ENCODE measurements at regions of chr12 and their contacts with region 1.

Region 1: DNA sequence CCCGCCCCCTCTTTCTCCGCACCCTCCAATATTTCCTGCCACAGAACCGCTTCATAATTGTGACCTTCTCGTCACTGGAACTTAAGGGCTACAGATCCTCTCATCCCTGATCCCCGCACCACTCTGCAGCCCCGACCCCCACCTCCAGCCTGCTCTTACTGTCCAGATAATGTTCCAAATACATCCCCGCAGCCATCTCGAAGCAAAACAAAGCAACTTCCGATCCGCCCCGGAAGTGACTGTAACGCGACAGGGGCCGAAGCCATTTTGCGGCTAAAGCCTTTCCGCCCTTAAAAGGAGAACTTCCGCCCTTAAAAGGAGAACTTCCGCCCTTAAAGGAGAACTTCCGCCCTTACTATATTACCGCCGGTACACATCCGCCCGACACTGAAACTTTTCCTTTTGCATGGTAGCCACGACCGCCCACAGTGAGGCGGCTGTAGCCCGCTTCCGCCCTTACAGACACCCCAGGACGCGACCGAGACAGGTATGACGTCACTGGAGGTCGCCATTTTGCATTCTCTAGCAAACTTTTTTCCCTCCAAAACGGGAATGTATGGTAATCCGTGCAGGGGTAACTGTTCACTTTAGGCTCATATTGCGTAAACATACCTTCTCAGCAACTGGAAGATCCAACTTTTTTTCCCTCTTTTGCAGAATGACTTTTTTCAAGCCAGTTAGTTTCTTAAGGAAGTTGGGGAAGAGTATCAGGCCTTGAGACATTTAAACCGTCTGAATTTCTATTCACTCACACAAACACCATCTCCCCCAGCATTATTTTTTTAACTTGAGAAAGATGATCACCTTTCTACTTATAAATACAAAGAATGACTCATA is at the start of gene ING4:
- DNase-seq: peak; percentile 99
- ATAC-seq: peak; percentile 98
- H3K4me3 ChIP-seq: peak within 1 kb of the TSS; percentile 62 to 94 (median 90)
- H3K4me3 Mint-ChIP-seq: peak within 1 kb of the TSS; percentile 93
- H3K27ac ChIP-seq: peak within 1 kb of the TSS; percentile 64 to 91
- H3K27ac Mint-ChIP-seq: peak within 1 kb of the TSS; percentile 92
- H3K4me1 ChIP-seq: peaks cover 15 to 19% of the 10 kb centered on the region in 2 donors
- H3K4me1 Mint-ChIP-seq: peaks cover 27% of the 10 kb centered on the region
- H3K27me3 ChIP-seq: no peaks in the 10 kb centered on the region
- H3K27me3 Mint-ChIP-seq: no peaks in the 10 kb centered on the region
- CTCF ChIP-seq: no peak
- total RNA-seq, gene ING4: 81.1 TPM in 2 replicates

Region 2: DNA sequence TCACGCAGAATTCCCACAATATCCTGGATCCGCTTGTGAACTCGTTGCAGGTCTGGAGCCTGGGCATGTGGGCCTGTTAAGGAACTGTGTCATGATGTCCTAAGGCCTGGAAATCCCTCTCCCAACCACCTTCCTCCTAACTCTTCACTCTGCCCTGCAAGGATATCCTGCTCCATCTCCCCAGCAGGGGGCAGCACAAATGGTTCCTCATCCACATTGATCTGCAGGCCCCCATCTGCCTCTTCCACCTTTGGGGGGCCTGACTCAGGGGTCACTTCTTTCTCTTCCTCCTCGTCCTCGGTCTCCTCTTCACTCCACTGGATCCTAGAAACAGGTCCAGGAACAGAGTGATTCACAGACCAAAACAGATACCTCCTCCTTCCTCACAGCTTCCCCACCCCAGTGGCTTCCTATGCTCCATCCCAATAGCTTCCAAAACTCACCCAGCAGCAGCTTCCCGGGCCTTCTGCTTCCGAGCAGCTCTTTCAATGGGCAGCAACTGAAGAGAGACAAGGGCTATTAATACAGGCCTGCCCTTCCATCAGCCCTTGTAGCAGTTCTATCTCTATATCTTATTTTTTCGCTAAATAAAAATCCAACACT is 99.6 kb before region 1 on chr12:
- CTCF ChIA-PET with region 1: no interaction called
- POLR2A ChIA-PET with region 1: no interaction called
- intact Hi-C with region 1: loop called (anchors 1 kb)
- DNase-seq: peak; percentile 76
- ATAC-seq: peak; percentile 28
- H3K4me3 ChIP-seq: no peak overlapping the region
- H3K4me3 Mint-ChIP-seq: no peak overlapping the region
- H3K27ac ChIP-seq: no peak overlapping the region
- H3K27ac Mint-ChIP-seq: peak overlapping the region; percentile 10
- H3K4me1 ChIP-seq: peaks cover 7 to 13% of the 10 kb centered on the region in 2 donors
- H3K4me1 Mint-ChIP-seq: peaks cover 28% of the 10 kb centered on the region
- H3K27me3 ChIP-seq: no peaks in the 10 kb centered on the region
- H3K27me3 Mint-ChIP-seq: no peaks in the 10 kb centered on the region
- CTCF ChIP-seq: peak; percentile 95

Region 3: DNA sequence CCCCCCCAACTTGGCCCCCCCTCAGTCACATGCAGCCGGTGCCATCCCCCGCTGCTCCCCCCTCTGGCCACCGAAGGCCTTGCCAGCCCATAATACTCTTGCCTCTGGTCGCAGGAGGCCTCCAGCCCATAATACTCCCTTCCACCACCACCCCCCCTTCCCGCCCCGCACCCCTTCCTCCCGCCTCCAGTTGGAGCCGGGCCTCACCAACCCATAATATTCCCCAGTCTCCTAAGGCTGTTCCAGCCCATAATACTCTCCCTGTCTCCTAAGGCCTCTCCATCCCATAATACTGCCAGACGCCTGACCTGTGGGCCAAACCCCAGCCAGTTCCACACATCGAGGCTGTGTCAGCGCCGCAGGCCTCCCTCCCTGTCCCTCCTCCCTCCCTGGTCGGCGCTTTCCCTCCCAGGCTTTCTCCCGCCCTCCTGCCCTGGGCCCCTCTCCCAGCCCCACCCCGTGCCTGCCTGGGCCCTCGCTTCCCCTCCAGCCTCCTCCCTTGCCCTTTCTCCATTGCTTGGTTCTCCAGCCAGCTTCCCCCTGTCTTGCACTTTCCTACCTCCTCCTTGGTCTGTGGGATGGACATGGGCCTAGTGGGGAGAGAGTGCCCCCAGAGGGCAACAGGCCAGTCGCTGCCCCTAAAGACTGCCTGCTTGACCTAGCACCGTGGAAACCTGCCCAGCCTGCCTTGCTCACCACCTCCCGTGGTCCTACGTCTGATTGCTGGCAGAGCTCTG is 49.2 kb before region 1 on chr12:
- CTCF ChIA-PET with region 1: no interaction called
- POLR2A ChIA-PET with region 1: interaction called, 4 read pairs
- intact Hi-C with region 1: loop called (anchors 1 kb)
- DNase-seq: peak; percentile 81
- ATAC-seq: peak; percentile 48
- H3K4me3 ChIP-seq: no peak overlapping the region
- H3K4me3 Mint-ChIP-seq: peak overlapping the region; percentile 24
- H3K27ac ChIP-seq: peak overlapping the region; percentile 63 to 88
- H3K27ac Mint-ChIP-seq: peak overlapping the region; percentile 87
- H3K4me1 ChIP-seq: peaks cover 32 to 51% of the 10 kb centered on the region in 2 donors
- H3K4me1 Mint-ChIP-seq: peaks cover 65% of the 10 kb centered on the region
- H3K27me3 ChIP-seq: no peaks in the 10 kb centered on the region
- H3K27me3 Mint-ChIP-seq: no peaks in the 10 kb centered on the region
- CTCF ChIP-seq: no peak

Region 4: DNA sequence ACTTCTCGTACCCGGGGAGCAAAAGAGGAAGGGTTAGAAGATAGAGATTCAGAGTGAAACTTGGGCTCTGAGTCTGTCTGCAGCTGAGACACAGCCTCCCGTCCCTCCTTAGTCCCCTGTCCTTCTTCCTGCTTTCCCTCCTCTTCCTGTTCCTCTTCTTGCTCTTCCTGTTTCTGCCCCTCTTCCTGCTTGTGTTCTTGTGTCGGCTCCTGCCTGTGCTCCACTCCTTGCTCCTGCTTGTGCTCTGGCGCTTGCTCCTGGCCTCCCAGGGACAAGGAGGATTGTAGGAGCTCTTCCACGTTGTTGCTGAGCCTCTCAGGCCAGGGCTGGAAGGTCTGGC is 18.9 kb before region 1 on chr12:
- CTCF ChIA-PET with region 1: no interaction called
- POLR2A ChIA-PET with region 1: no interaction called
- intact Hi-C with region 1: no loop called
- DNase-seq: peak; percentile 61
- ATAC-seq: peak; percentile 51
- H3K4me3 ChIP-seq: peak overlapping the region in 1 of 5 experiments; percentile 6
- H3K4me3 Mint-ChIP-seq: peak overlapping the region; percentile 48
- H3K27ac ChIP-seq: peak overlapping the region; percentile 36 to 59
- H3K27ac Mint-ChIP-seq: peak overlapping the region; percentile 83
- H3K4me1 ChIP-seq: peaks cover 28 to 50% of the 10 kb centered on the region in 2 donors
- H3K4me1 Mint-ChIP-seq: peaks cover 49% of the 10 kb centered on the region
- H3K27me3 ChIP-seq: no peaks in the 10 kb centered on the region
- H3K27me3 Mint-ChIP-seq: no peaks in the 10 kb centered on the region
- CTCF ChIP-seq: no peak

Region 5: GRCh38 chr12:6723607-6724396 is 60.7 kb after region 1 on chr12 and contains the start of gene COPS7A:
- CTCF ChIA-PET with region 1: interaction called, 3 read pairs
- POLR2A ChIA-PET with region 1: interaction called, 3 read pairs
- intact Hi-C with region 1: loop called (anchors 1 kb)
- DNase-seq: peak; percentile 98
- ATAC-seq: peak; percentile 89
- H3K4me3 ChIP-seq: peak within 1 kb of the TSS; percentile 53 to 65 (median 63)
- H3K4me3 Mint-ChIP-seq: peak within 1 kb of the TSS; percentile 91
- H3K27ac ChIP-seq: peak within 1 kb of the TSS; percentile 81 to 86
- H3K27ac Mint-ChIP-seq: peak within 1 kb of the TSS; percentile 94
- H3K4me1 ChIP-seq: peaks cover 13 to 17% of the 10 kb centered on the region in 2 donors
- H3K4me1 Mint-ChIP-seq: peaks cover 19% of the 10 kb centered on the region
- H3K27me3 ChIP-seq: no peaks in the 10 kb centered on the region
- H3K27me3 Mint-ChIP-seq: no peaks in the 10 kb centered on the region
- CTCF ChIP-seq: no peak
- total RNA-seq, gene COPS7A: 28.3 and 29.4 TPM in 2 replicates

Region 6: DNA sequence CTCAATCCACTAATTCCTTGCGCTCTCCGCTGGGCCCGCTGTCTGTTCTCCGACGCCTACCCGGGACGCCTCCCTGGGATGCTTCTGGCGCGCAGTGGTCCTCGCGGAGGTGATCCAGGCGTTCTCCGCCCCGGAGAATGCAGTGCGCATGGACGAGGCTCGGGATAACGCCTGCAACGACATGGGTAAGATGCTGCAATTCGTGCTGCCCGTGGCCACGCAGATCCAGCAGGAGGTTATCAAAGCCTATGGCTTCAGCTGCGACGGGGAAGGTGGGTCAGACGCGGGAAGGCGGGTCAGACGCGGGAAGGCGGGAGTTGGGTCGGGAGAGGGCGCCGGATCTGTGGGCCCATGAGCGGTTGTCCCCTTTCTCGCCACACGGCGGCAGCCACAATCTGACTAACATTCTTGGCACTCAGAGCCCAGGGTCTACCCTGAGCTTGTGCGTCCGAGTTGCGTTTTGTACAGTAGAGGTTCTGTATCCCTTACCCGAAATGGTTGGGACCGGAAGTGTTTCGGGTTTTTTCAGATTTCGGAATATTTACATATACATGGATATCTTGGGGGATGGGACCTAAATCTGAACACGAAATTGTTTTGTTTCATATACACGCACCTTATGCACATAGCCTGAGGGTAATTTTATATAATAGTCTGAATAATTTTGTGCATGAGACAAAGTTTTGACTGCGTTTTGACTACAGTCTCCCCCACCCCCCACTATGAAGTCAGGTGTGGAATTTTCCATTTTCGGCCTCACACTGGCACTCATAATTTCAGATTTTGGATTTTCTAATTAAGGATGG is 281.5 kb after region 1 on chr12:
- CTCF ChIA-PET with region 1: no interaction called
- POLR2A ChIA-PET with region 1: no interaction called
- intact Hi-C with region 1: no loop called
- DNase-seq: peak; percentile 91
- ATAC-seq: peak; percentile 46
- H3K4me3 ChIP-seq: peak overlapping the region; percentile 25 to 92 (median 80)
- H3K4me3 Mint-ChIP-seq: peak overlapping the region; percentile 97
- H3K27ac ChIP-seq: peak overlapping the region; percentile 93 to 99
- H3K27ac Mint-ChIP-seq: peak overlapping the region; percentile 97
- H3K4me1 ChIP-seq: peaks cover 56 to 73% of the 10 kb centered on the region in 2 donors
- H3K4me1 Mint-ChIP-seq: peaks cover 63% of the 10 kb centered on the region
- H3K27me3 ChIP-seq: no peaks in the 10 kb centered on the region
- H3K27me3 Mint-ChIP-seq: no peaks in the 10 kb centered on the region
- CTCF ChIP-seq: peak; percentile 90

Measured in B cell (primary cell).